Aorta (tissue), 5 donors: ENCODE measurements at regions of chr11 and their contacts with region 1.

Region 1: GRCh38 chr11:27296497-27296896 is 66.5 kb downstream of the CCDC34 start:
- DNase-seq: no peak
- ATAC-seq: no peak
- H3K4me3 ChIP-seq: no peak overlapping the region
- H3K27ac ChIP-seq: no peak overlapping the region
- H3K4me1 ChIP-seq: no peaks in the 10 kb centered on the region
- H3K27me3 ChIP-seq: no peaks in the 10 kb centered on the region

Region 2: GRCh38 chr11:27485930-27486773 is 189.7 kb after region 1 on chr11:
- intact Hi-C with region 1: loop called (anchors 10 kb)
- DNase-seq: no peak
- ATAC-seq: peak; percentile 64
- H3K4me3 ChIP-seq: no peak overlapping the region
- H3K27ac ChIP-seq: no peak overlapping the region
- H3K4me1 ChIP-seq: no peaks in the 10 kb centered on the region
- H3K27me3 ChIP-seq: no peaks in the 10 kb centered on the region

Region 3: DNA sequence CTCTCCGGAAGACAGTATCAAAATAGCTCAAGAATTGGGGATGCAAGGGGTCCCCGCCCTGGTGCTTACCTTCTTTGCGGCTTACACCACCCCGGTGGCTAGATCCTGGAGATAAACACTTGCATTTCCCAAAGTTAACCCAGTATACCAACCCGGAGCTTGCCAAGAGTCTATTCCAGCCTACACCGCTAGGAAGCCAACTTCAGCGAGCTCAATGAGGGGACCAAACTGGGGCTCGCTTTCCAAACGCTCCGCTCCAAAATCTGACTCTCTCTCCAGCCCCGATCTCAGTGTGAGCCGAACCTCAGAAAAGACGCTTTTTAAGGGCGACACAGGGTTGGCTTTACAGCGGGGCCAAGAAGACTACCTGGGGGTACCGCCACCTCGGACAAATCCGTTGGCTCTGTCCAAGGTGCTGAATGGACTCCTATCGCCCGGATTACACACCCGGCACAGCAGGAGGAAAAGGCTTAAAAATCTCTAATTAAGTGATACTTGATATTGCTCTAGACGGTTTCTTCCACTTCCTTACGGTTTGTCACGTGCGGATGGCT is 423.9 kb after region 1 on chr11:
- intact Hi-C with region 1: no loop called
- DNase-seq: no peak
- ATAC-seq: no peak
- H3K4me3 ChIP-seq: peak overlapping the region in 1 of 2 donors; percentile 21
- H3K27ac ChIP-seq: no peak overlapping the region
- H3K4me1 ChIP-seq: no peaks in the 10 kb centered on the region
- H3K27me3 ChIP-seq: no peaks in the 10 kb centered on the region